ENCODE measurements at regions of chr11 and their contacts with region 1.

Region 1: DNA sequence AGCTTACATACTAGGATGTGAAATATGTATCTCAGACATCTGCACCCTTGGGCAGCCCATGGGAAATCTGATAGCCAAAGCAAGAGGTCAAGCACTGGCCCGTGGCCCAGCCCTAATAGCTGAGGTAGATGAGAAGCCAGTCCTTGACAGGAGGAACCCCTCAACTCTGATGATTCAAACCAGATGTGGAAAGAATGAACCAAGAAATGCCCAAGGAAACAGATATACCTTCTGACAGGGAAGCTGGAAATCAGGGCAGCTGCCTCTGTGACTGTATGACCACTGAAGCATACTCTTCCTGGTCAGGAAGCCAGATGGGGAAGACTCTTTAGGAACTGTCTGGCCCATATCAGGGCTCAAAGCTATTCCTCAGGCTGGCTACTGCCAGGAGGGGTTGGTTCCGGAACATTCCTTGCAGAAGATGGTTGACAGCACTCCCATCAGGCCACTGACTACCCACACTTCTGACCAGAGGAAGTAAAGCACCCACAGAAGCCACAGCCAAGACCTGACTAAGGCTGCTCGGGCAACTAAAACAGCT is 124.2 kb downstream of the SWAP70 start:
- DNase-seq: peak; percentile 38
- H3K4me3 ChIP-seq: no peak overlapping the region
- H3K27ac ChIP-seq: no peak overlapping the region
- H3K4me1 ChIP-seq: no peaks in the 10 kb centered on the region
- H3K27me3 ChIP-seq: no peaks in the 10 kb centered on the region
- CTCF ChIP-seq: no peak

Region 2: DNA sequence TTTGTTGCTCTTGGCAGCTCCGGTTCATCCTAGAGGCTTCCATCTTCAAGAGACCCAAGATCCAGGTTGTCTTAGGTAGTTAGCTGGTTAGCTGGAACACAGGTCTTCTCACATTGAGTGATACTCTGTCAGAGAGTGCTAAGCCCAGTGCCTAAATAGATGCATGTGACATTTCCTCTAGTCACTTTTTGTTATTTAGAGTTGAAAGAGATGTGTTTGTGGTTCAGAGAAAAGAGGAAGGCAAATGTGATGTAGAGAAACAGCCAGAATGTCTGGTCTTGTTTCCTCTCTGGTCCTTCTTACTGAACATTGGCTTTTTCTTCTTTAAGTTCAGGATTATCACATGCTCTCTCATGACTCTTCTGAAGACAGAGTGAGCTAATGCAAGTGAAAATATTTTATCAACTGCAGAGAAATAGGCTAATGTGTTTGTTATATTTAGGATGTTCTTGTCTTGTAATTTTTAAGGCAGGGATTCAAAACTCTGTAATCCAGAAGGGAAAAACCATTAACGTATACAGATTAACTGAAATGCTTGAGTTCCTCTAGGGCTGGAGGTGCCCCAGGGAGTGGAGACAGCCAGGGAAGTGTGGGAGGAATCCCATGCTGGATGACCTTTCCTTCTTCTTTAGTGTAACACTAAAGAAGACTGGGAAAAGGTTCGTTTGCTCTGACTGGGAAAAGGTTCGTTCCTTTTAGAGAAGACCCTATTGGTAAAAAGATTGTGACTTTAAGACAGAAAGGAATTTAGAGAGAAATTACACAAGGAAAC is 48.7 kb before region 1 on chr11:
- CTCF ChIA-PET with region 1: no interaction called
- dilution Hi-C with region 1: no loop called
- in situ Hi-C with region 1: no loop called
- intact Hi-C with region 1: no loop called
- DNase-seq: no peak
- H3K4me3 ChIP-seq: no peak overlapping the region
- H3K27ac ChIP-seq: no peak overlapping the region
- H3K4me1 ChIP-seq: no peaks in the 10 kb centered on the region
- H3K27me3 ChIP-seq: no peaks in the 10 kb centered on the region
- CTCF ChIP-seq: no peak

Region 3: DNA sequence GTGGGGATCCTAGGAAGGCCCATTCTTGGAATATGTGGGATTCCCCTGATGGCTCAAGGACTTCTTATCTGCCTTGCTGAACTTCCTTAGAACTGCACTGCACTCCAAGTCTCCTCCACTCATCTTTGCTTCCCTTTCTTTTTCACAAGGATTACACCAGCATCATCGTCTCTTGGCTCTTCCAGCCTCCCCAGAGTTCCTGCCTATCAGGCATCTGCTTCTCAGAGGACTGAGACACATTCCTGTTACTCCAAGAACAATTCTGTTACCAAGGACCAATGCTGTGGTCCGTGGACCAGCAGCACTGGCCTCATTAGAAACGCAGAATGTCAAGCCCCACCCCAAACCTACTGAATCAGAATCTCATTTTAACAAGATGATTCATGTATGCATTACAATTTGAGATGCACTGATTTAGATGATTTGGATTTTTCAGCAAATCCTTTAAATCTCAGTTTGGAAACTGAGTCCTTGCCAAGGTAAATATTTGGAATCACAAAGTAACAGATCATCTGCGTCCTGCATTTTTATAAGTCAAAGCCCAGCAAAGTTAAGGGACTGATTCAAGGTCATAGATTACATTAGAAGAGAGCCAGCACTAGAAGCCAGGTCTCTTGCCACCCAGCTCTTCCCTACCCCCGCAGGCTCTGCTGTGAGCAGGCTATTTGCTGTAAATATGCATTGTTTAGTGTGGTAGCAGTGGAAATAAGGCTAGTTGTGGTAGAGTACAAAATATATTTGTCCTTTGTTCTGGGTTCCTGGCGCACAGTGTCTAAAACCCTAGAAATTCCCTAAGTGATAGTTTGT is 13.3 kb before region 1 on chr11:
- CTCF ChIA-PET with region 1: no interaction called
- dilution Hi-C with region 1: no loop called
- in situ Hi-C with region 1: no loop called
- intact Hi-C with region 1: loop called (anchors 2 kb)
- DNase-seq: no peak
- H3K4me3 ChIP-seq: no peak overlapping the region
- H3K27ac ChIP-seq: no peak overlapping the region
- H3K4me1 ChIP-seq: peaks cover 5% of the 10 kb centered on the region
- H3K27me3 ChIP-seq: no peaks in the 10 kb centered on the region
- CTCF ChIP-seq: no peak